B cell (primary cell): ENCODE measurements at regions of chr21 and their contacts with region 1.

Region 1: DNA sequence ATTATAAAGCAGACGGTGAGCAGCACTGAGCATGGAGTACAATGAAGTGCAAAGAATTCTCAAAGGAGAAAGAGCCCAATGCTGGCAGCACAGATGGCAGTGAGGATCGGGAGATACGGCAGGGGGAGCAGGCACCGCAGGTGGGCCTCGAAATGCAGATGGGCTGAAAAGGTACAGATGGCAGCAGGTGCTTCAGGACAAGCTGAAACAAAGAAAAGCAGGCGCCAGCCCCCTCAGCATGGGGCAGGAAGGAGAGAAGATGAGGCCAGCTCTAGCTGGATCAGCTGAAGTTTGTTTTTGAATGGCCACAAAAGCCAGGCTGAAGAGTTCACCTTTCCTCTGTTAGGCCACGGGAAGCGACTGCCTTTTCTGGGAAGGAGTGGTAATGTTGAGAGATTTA is 7.7 kb downstream of the CFAP298 start:
- DNase-seq: no peak
- ATAC-seq: no peak
- H3K4me3 ChIP-seq: no peak overlapping the region
- H3K4me3 Mint-ChIP-seq: no peak overlapping the region
- H3K27ac ChIP-seq: no peak overlapping the region
- H3K27ac Mint-ChIP-seq: no peak overlapping the region
- H3K4me1 ChIP-seq: no peaks in the 10 kb centered on the region
- H3K4me1 Mint-ChIP-seq: peaks cover 4% of the 10 kb centered on the region
- H3K27me3 ChIP-seq: no peaks in the 10 kb centered on the region
- H3K27me3 Mint-ChIP-seq: no peaks in the 10 kb centered on the region
- CTCF ChIP-seq: no peak

Region 2: DNA sequence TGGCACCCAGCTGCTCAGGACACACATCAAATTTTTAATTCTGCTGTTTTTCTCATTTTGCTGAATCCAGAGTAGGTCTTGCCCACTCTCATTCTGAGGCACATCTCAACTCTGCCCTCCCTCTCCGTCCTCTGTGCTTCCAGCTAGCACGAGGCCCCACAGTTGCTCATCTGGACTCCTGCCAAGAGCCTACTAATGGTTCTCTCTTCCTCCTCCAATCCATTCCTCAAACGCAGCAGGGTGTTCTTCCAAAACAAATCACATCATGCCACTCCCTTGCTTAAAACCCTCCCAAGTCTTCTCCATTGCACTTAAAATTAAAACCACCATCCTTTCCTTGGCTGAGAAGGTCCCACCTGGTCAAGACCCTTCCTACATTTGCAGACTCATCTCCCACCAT is 822.7 kb before region 1 on chr21:
- CTCF ChIA-PET with region 1: interaction called, 15 read pairs
- POLR2A ChIA-PET with region 1: no interaction called
- intact Hi-C with region 1: no loop called
- DNase-seq: no peak
- ATAC-seq: no peak
- H3K4me3 ChIP-seq: no peak overlapping the region
- H3K4me3 Mint-ChIP-seq: no peak overlapping the region
- H3K27ac ChIP-seq: no peak overlapping the region
- H3K27ac Mint-ChIP-seq: no peak overlapping the region
- H3K4me1 ChIP-seq: peaks cover 6 to 11% of the 10 kb centered on the region in 2 donors
- H3K4me1 Mint-ChIP-seq: peaks cover 15% of the 10 kb centered on the region
- H3K27me3 ChIP-seq: no peaks in the 10 kb centered on the region
- H3K27me3 Mint-ChIP-seq: no peaks in the 10 kb centered on the region
- CTCF ChIP-seq: no peak

Region 3: DNA sequence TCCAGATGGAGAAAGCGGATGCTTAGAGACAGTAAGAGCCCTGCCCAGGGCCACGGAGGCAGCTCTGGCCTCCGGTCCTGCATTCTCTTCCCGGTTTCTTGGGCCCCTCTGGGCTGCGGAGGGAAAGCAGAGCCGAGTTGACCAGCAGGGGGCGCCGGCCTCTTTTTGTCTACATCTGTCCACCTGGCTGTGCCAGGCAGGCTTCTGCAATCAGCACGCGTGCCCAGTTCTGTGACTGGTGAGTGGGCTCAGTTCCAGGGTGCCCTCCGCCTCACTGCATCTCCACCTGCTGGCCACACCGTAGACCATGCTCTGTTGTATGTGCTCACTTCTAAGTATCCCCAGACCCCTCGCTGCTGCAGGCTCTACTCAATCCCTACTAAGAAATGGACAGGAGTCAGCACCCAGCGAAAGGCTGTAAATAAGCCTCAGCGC is 738.4 kb before region 1 on chr21:
- CTCF ChIA-PET with region 1: interaction called, 6 read pairs
- POLR2A ChIA-PET with region 1: no interaction called
- intact Hi-C with region 1: loop called (anchors 5 kb)
- DNase-seq: peak; percentile 69
- ATAC-seq: peak; percentile 86
- H3K4me3 ChIP-seq: no peak overlapping the region
- H3K4me3 Mint-ChIP-seq: no peak overlapping the region
- H3K27ac ChIP-seq: no peak overlapping the region
- H3K27ac Mint-ChIP-seq: no peak overlapping the region
- H3K4me1 ChIP-seq: peaks cover 0 to 8% of the 10 kb centered on the region in 2 donors
- H3K4me1 Mint-ChIP-seq: no peaks in the 10 kb centered on the region
- H3K27me3 ChIP-seq: peaks cover 0 to 30% (median 9%) of the 10 kb centered on the region in 4 experiments
- H3K27me3 Mint-ChIP-seq: peaks cover 37% of the 10 kb centered on the region
- CTCF ChIP-seq: peak; percentile 85

Region 4: GRCh38 chr21:32463889-32464300 is 140.6 kb before region 1 on chr21:
- CTCF ChIA-PET with region 1: no interaction called
- POLR2A ChIA-PET with region 1: no interaction called
- intact Hi-C with region 1: no loop called
- DNase-seq: no peak
- ATAC-seq: no peak
- H3K4me3 ChIP-seq: no peak overlapping the region
- H3K4me3 Mint-ChIP-seq: no peak overlapping the region
- H3K27ac ChIP-seq: no peak overlapping the region
- H3K27ac Mint-ChIP-seq: no peak overlapping the region
- H3K4me1 ChIP-seq: no peaks in the 10 kb centered on the region
- H3K4me1 Mint-ChIP-seq: no peaks in the 10 kb centered on the region
- H3K27me3 ChIP-seq: no peaks in the 10 kb centered on the region
- H3K27me3 Mint-ChIP-seq: peaks cover 3% of the 10 kb centered on the region
- CTCF ChIP-seq: no peak

Region 5: GRCh38 chr21:32562426-32562825 is 42.0 kb before region 1 on chr21:
- CTCF ChIA-PET with region 1: no interaction called
- POLR2A ChIA-PET with region 1: no interaction called
- intact Hi-C with region 1: no loop called
- DNase-seq: no peak
- ATAC-seq: no peak
- H3K4me3 ChIP-seq: no peak overlapping the region
- H3K4me3 Mint-ChIP-seq: no peak overlapping the region
- H3K27ac ChIP-seq: no peak overlapping the region
- H3K27ac Mint-ChIP-seq: no peak overlapping the region
- H3K4me1 ChIP-seq: peaks cover 0 to 1% of the 10 kb centered on the region in 2 donors
- H3K4me1 Mint-ChIP-seq: no peaks in the 10 kb centered on the region
- H3K27me3 ChIP-seq: peaks cover 0 to 10% (median 5%) of the 10 kb centered on the region in 4 experiments
- H3K27me3 Mint-ChIP-seq: peaks cover 31% of the 10 kb centered on the region
- CTCF ChIP-seq: no peak

Region 6: GRCh38 chr21:32581732-32582131 is 22.7 kb before region 1 on chr21:
- CTCF ChIA-PET with region 1: interaction called, 10 read pairs
- POLR2A ChIA-PET with region 1: no interaction called
- intact Hi-C with region 1: no loop called
- DNase-seq: no peak
- ATAC-seq: no peak
- H3K4me3 ChIP-seq: no peak overlapping the region
- H3K4me3 Mint-ChIP-seq: no peak overlapping the region
- H3K27ac ChIP-seq: no peak overlapping the region
- H3K27ac Mint-ChIP-seq: no peak overlapping the region
- H3K4me1 ChIP-seq: no peaks in the 10 kb centered on the region
- H3K4me1 Mint-ChIP-seq: no peaks in the 10 kb centered on the region
- H3K27me3 ChIP-seq: no peaks in the 10 kb centered on the region
- H3K27me3 Mint-ChIP-seq: no peaks in the 10 kb centered on the region
- CTCF ChIP-seq: no peak

Region 7: DNA sequence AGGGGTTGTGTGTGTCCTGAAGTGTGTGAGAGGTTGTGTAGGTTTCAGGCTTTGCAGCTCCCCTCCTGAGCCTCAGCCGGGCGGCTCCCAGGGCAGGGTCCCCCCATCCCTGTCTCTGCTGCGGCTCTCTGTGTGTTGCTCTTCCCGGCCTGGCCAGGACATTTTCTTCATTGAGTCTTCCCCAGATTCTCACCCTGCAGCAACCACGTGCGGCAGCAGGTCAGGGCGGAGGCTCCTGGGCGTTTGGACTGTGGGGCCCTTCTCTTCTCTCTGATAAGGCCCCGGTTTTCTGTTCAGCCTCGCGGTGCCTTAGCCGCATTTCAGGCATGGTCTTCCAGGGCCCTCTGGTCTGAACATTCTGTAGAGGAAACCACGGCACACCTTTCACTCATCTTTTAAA is 17.3 kb before region 1 on chr21:
- CTCF ChIA-PET with region 1: interaction called, 12 read pairs
- POLR2A ChIA-PET with region 1: no interaction called
- intact Hi-C with region 1: no loop called
- DNase-seq: no peak
- ATAC-seq: no peak
- H3K4me3 ChIP-seq: no peak overlapping the region
- H3K4me3 Mint-ChIP-seq: no peak overlapping the region
- H3K27ac ChIP-seq: no peak overlapping the region
- H3K27ac Mint-ChIP-seq: no peak overlapping the region
- H3K4me1 ChIP-seq: no peaks in the 10 kb centered on the region
- H3K4me1 Mint-ChIP-seq: no peaks in the 10 kb centered on the region
- H3K27me3 ChIP-seq: no peaks in the 10 kb centered on the region
- H3K27me3 Mint-ChIP-seq: no peaks in the 10 kb centered on the region
- CTCF ChIP-seq: no peak